Upper lobe of right lung (tissue), 1 donor: ENCODE measurements at regions of chr1 and their contacts with region 1.

Region 1: DNA sequence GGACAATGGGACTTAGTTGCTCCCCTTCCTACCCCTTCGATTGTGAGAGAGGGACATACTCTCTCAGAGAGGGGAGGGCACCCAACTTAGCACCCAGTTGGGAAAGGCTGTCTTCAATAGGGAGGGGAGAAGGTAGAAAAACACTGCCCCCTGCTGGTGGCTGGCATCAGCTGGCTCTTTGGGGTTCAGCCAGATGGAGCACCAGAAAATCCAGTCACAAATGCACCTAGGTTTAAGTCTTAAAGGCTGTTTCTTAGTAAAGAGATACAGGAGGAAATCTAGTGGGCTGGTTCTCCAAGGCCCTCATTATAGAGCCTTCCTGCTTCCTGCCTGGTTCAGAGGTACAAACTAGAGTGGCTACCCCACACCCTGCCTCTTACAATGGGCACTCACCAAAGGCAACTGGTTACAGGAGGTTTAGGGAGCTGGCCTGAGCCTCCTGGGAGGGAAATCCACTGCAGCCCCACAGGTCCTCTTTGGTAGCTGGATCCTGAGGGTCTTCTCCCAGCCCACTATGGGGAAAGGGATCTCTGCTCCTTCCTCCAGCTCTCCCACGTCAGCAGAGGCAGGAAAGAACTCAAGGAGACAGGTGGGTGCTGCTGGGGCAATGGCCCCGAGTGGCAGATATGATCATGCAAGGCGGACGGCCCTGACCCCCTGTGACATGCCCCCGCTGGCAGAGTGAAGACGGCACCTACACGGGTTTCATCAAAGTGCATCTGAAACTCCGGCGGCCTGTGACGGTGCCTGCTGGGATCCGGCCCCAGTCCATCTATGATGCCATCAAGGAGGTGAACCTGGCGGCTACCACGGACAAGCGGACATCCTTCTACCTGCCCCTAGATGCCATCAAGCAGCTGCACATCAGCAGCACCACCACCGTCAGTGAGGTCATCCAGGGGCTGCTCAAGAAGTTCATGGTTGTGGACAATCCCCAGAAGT is 28.3 kb downstream of the EIF2D start:
- DNase-seq: peak; percentile 82
- ATAC-seq: peak; percentile 74
- H3K4me3 ChIP-seq: no peak overlapping the region
- H3K27ac ChIP-seq: no peak overlapping the region
- H3K4me1 ChIP-seq: peaks cover 51% of the 10 kb centered on the region
- H3K27me3 ChIP-seq: no peaks in the 10 kb centered on the region
- CTCF ChIP-seq: peak; percentile 88

Region 2: GRCh38 chr1:206479183-206480125 is 104.5 kb before region 1 on chr1:
- intact Hi-C with region 1: no loop called
- DNase-seq: no peak
- ATAC-seq: peak; percentile 75
- H3K4me3 ChIP-seq: no peak overlapping the region
- H3K27ac ChIP-seq: no peak overlapping the region
- H3K4me1 ChIP-seq: no peaks in the 10 kb centered on the region
- H3K27me3 ChIP-seq: no peaks in the 10 kb centered on the region
- CTCF ChIP-seq: peak; percentile 80

Region 3: GRCh38 chr1:206489980-206490770 is 93.8 kb before region 1 on chr1:
- intact Hi-C with region 1: loop called (anchors 10 kb)
- DNase-seq: peak; percentile 87
- ATAC-seq: peak; percentile 93
- H3K4me3 ChIP-seq: no peak overlapping the region
- H3K27ac ChIP-seq: no peak overlapping the region
- H3K4me1 ChIP-seq: peaks cover 13% of the 10 kb centered on the region
- H3K27me3 ChIP-seq: no peaks in the 10 kb centered on the region
- CTCF ChIP-seq: peak; percentile 93

Region 4: DNA sequence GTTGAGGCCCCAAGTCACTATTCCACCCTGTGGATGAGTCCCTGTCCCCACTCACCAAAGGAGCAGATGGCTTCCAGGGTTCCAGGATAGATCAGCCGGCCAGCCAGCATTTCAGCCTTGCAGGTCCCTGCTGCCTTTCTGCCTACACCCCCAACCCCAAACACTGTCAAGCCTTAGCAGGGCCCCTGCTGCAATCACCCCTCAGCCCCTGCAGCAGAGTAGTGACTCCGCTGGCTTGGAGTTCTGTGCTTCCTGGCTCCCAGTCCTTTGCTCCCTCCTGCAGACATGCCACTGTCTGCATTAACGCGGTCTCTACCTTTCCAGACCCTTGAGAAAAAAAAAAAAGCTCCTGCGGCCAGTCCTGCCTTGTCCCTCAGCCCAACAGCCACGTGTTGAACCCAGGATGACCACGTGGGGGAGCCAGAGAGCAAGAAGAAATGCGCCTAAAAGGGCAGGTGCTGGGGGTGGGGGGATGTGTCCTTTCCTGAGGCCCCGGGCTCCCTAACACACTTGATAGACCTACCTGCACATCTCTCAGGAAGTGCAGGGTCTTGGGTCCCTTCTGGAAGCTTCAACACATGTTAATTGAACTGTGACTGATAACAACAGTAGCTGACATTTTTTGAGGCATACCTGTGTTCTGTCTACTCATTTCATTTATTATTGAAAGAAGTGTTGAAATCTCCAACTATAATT is 39.3 kb before region 1 on chr1:
- intact Hi-C with region 1: loop called (anchors 5 kb)
- DNase-seq: peak; percentile 85
- ATAC-seq: peak; percentile 85
- H3K4me3 ChIP-seq: no peak overlapping the region
- H3K27ac ChIP-seq: no peak overlapping the region
- H3K4me1 ChIP-seq: peaks cover 12% of the 10 kb centered on the region
- H3K27me3 ChIP-seq: no peaks in the 10 kb centered on the region
- CTCF ChIP-seq: peak; percentile 91

Region 5: DNA sequence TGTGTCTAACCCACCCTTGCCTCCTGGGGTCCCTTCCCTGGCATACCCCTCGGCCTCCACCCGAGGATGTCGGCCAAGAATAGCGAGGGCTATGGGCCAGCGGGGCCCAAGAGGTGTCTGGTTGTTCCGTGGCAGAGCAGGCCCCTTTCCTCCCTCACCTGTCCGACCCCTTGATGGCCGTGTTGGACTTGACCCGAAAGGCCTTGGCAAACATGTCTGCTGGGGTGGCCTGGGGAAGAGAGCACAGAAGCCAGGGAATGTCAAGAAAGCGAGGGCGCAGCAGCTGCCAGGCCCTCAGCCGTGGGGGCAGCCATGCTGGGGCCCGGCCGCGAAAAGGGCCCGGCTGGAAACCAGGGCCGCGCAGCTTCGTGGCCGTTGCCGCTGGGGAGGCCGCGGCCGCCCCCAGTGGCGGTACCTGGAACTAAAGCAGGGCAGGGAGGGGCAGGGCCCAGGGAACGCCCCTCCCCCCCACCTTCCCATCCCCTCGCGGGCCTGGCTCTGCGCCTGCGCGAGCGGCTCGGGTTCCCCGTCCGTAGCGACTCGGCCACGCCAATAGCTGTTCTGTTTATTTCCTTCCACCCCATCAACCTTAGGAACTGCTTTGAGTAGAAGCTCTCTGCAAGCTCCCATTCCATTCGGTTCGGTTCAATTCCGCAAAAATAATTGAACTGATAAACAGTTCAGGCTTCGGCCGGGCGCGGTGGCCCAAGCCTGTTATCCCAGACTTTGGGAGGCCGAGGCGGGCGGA is 28.3 kb after region 1 on chr1 and contains the start of gene EIF2D:
- intact Hi-C with region 1: no loop called
- DNase-seq: peak; percentile 97
- ATAC-seq: peak; percentile 100
- H3K4me3 ChIP-seq: peak within 1 kb of the TSS; percentile 66
- H3K27ac ChIP-seq: peak within 1 kb of the TSS; percentile 87
- H3K4me1 ChIP-seq: peaks cover 7% of the 10 kb centered on the region
- H3K27me3 ChIP-seq: no peaks in the 10 kb centered on the region
- CTCF ChIP-seq: peak; percentile 98
- total RNA-seq, gene EIF2D: 49.8 TPM

Region 6: DNA sequence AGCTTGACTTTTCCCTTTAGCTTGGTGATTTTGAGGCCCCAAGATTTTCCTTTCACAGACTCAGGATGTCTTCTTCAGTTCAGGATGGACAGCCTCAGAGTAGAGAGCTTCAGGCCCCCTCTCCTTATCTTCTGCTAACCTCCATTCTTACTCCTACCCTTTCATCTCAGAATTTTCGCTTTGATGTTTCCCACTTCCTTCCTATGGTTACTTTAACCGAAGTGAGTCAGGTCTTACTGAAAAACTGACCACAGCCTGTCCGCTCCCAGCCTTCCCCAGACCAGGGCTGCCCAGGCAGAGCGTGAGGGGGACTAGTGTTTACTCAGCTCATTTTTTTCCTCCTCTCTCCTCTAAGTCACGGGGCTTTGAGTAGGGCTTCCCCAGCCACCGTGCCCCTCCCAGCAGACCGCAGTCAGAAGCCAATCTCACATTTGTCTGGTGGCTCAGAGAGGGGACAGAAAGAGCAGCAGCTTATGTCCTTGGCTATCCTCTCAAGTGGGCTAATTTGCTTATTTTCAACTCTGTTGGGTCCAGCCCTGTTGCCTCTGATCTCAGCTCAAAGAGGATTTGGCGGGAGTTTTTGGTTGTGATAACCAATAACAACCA is 182.4 kb after region 1 on chr1:
- intact Hi-C with region 1: no loop called
- DNase-seq: peak; percentile 82
- ATAC-seq: peak; percentile 95
- H3K4me3 ChIP-seq: no peak overlapping the region
- H3K27ac ChIP-seq: no peak overlapping the region
- H3K4me1 ChIP-seq: peaks cover 11% of the 10 kb centered on the region
- H3K27me3 ChIP-seq: no peaks in the 10 kb centered on the region
- CTCF ChIP-seq: no peak